Caco-2 (cell line): ENCODE measurements at regions of chr6 and their contacts with region 1.

Region 1: GRCh38 chr6:56843573-56844349 is 111.1 kb upstream of the BEND6 start:
- DNase-seq: peak; percentile 82 to 89
- H3K4me3 ChIP-seq: peak overlapping the region; percentile 59
- H3K4me3 Mint-ChIP-seq: peak overlapping the region; percentile 85
- H3K27ac Mint-ChIP-seq: no peak overlapping the region
- H3K4me1 ChIP-seq: peaks cover 27% of the 10 kb centered on the region
- H3K4me1 Mint-ChIP-seq: peaks cover 7% of the 10 kb centered on the region
- H3K27me3 ChIP-seq: no peaks in the 10 kb centered on the region
- H3K27me3 Mint-ChIP-seq: no peaks in the 10 kb centered on the region
- CTCF ChIP-seq: peak; percentile 58 to 71

Region 2: GRCh38 chr6:56764081-56764566 is 79.6 kb before region 1 on chr6:
- CTCF ChIA-PET with region 1: no interaction called
- POLR2A ChIA-PET with region 1: no interaction called
- intact Hi-C with region 1: loop called (anchors 1 kb)
- DNase-seq: peak; percentile 60 to 68
- H3K4me3 ChIP-seq: no peak overlapping the region
- H3K4me3 Mint-ChIP-seq: peak overlapping the region; percentile 25
- H3K27ac Mint-ChIP-seq: peak overlapping the region; percentile 72
- H3K4me1 ChIP-seq: peaks cover 37% of the 10 kb centered on the region
- H3K4me1 Mint-ChIP-seq: peaks cover 16% of the 10 kb centered on the region
- H3K27me3 ChIP-seq: no peaks in the 10 kb centered on the region
- H3K27me3 Mint-ChIP-seq: no peaks in the 10 kb centered on the region
- CTCF ChIP-seq: peak; percentile 47 to 50

Region 3: GRCh38 chr6:56808871-56809359 is 34.8 kb before region 1 on chr6:
- CTCF ChIA-PET with region 1: no interaction called
- POLR2A ChIA-PET with region 1: no interaction called
- intact Hi-C with region 1: loop called (anchors 2 kb)
- DNase-seq: peak; percentile 55 to 60
- H3K4me3 ChIP-seq: no peak overlapping the region
- H3K4me3 Mint-ChIP-seq: peak overlapping the region; percentile 31
- H3K27ac Mint-ChIP-seq: peak overlapping the region; percentile 87
- H3K4me1 ChIP-seq: peaks cover 42% of the 10 kb centered on the region
- H3K4me1 Mint-ChIP-seq: peaks cover 22% of the 10 kb centered on the region
- H3K27me3 ChIP-seq: no peaks in the 10 kb centered on the region
- H3K27me3 Mint-ChIP-seq: no peaks in the 10 kb centered on the region
- CTCF ChIP-seq: no peak

Region 4: GRCh38 chr6:56902641-56903464 is 59.1 kb after region 1 on chr6:
- CTCF ChIA-PET with region 1: no interaction called
- POLR2A ChIA-PET with region 1: no interaction called
- intact Hi-C with region 1: no loop called
- DNase-seq: peak in 1 of 2 experiments; percentile 13
- H3K4me3 ChIP-seq: no peak overlapping the region
- H3K4me3 Mint-ChIP-seq: peak overlapping the region; percentile 0
- H3K27ac Mint-ChIP-seq: no peak overlapping the region
- H3K4me1 ChIP-seq: 0 out of 2 replicates have a peak, but pooled peaks cover 6% of the 10 kb centered on the region
- H3K4me1 Mint-ChIP-seq: peaks cover 22% of the 10 kb centered on the region
- H3K27me3 ChIP-seq: no peaks in the 10 kb centered on the region
- H3K27me3 Mint-ChIP-seq: peaks cover 2% of the 10 kb centered on the region
- CTCF ChIP-seq: peak; percentile 67